Activated CD4-positive, alpha-beta T cell treated with anti-CD3 and anti-CD28 coated beads, Interleukin-2, amount 10 ng/mL, durations not matched to agents 24 days and 14 days (primary cell): ENCODE measurements at regions of chr4 and their contacts with region 1.

Region 1: DNA sequence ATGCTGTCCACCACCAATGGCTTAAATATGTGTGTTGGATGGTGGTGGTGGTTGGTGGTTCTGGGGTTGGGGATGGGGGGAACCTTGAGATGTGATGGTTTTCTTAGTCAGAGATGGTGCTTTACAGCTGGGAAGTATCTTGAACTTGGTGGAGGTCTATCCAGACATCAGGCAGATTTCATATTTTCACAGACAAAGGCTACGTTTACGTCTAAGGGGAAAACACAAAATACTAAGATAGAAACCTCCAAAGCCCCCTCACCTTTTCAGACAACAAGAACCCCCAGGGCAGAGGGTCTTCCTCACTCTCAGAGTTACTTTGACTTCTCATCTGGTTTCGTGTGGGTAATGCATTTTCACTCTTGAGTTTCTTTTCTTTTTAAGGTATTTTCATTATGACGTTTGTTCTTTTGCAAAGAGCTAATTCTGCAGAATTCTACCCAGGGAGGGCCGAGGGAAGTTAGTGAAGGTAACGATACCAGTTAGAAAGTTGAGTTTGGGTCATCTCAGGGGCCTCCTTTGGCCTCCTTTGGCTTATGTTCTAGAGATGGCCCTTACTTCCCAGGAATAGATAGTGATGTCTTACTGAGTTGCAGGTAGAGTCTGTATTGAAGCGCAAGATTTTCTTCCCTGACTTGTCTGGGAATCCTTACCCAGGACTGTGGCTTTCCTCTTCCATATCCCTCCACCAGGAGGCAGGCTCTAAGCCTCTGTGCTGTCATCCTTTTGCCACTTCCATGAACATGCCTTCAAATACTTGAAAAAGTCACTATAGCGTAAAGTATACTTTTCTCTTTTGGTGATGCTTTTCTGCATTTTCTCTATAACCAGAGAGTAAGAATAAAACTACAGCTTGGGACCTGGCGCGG is 31.9 kb downstream of the RHOH start:
- DNase-seq: peak; percentile 80
- H3K4me3 Mint-ChIP-seq: peak overlapping the region; percentile 82
- H3K27ac Mint-ChIP-seq: peak overlapping the region; percentile 98
- H3K4me1 Mint-ChIP-seq: peaks cover 76% of the 10 kb centered on the region
- H3K27me3 Mint-ChIP-seq: no peaks in the 10 kb centered on the region

Region 2: DNA sequence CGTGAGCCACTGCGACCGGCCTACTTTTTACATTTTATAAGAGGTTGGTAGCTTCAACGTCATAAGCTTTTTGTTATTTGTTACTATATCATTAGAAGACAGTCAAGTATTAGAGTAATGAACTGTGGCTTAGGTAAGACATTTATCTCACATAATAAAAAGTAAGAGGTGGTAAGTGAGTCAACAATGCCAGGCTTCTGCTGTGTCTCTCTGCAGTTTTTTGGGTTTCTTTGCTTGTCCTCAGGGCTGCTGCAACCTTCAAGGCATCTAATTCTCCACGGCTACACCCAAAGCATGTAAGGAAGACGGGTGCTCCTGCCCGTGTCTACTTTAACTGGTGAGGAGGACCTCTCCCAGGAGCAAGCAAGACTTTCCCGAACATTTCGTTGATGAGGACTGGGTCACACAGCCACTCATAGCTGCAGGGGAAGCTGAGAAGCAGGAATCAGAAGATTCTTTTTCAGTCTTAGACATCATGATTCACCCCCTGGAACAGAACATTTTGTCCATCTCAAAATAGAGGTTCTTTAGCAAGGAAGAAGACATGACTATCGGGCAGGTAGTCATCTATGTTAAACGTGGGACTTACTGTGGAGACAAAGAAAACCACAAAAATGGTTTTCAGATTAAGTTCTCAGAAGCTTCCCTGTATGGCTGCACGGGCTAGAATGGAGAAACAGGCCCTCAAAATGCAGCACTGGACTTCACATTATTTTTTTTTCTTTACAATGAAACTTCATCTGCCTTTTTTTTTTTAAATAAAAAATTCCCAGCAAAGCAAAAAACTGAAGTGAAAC is 44.9 kb before region 1 on chr4:
- intact Hi-C with region 1: loop called (anchors 1 kb)
- DNase-seq: no peak
- H3K4me3 Mint-ChIP-seq: peak overlapping the region; percentile 21
- H3K27ac Mint-ChIP-seq: peak overlapping the region; percentile 77
- H3K4me1 Mint-ChIP-seq: peaks cover 32% of the 10 kb centered on the region
- H3K27me3 Mint-ChIP-seq: no peaks in the 10 kb centered on the region

Region 3: DNA sequence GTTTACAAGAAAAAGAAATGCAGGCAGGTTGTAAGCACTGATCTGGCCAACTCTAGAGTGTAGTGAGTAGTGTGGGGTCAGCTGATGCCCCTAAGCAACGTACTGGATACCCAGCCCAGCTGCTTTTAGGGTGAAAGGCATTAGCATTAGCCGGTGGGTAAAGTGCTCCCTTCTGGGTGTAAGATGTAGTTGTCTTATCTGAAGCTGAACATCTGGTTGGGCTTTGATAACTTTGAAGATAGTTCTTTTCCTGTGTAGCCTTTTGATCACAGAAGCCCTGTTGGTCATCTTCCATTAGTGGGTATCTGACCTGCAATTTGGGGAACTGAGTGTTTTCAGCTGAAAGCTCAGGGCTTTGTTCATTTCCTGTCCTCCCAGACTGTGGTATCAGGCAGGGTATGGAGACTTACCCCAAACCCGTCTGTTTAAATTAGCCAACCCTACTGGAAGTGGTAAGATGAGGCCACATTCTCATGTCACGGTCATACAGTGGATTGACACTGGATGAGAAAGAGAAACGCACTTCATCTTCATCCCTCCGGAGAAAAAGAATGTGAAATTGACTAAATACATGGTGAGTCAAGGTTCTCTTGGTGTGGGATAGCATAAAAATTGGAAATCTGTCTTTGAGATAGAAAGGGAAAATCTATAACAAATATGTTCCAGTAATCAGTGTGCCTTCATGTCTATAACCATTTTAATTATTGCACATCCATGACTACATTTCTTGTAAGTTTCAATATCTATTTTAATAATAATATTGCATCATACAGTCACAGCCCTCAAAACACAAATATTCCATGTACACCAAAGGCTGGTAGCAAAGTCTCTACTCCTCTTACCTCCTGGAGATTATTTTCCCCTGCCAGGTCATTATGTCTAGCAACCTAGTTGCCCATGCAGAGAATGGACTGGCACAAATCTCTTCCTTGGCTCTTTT is 23.2 kb before region 1 on chr4:
- intact Hi-C with region 1: loop called (anchors 1 kb)
- DNase-seq: peak; percentile 87
- H3K4me3 Mint-ChIP-seq: peak overlapping the region; percentile 93
- H3K27ac Mint-ChIP-seq: peak overlapping the region; percentile 94
- H3K4me1 Mint-ChIP-seq: peaks cover 66% of the 10 kb centered on the region
- H3K27me3 Mint-ChIP-seq: no peaks in the 10 kb centered on the region

Region 4: GRCh38 chr4:40255393-40256281 is 26.9 kb after region 1 on chr4:
- intact Hi-C with region 1: loop called (anchors 1 kb)
- DNase-seq: no peak
- H3K4me3 Mint-ChIP-seq: peak overlapping the region; percentile 53
- H3K27ac Mint-ChIP-seq: peak overlapping the region; percentile 80
- H3K4me1 Mint-ChIP-seq: peaks cover 55% of the 10 kb centered on the region
- H3K27me3 Mint-ChIP-seq: no peaks in the 10 kb centered on the region

Region 5: DNA sequence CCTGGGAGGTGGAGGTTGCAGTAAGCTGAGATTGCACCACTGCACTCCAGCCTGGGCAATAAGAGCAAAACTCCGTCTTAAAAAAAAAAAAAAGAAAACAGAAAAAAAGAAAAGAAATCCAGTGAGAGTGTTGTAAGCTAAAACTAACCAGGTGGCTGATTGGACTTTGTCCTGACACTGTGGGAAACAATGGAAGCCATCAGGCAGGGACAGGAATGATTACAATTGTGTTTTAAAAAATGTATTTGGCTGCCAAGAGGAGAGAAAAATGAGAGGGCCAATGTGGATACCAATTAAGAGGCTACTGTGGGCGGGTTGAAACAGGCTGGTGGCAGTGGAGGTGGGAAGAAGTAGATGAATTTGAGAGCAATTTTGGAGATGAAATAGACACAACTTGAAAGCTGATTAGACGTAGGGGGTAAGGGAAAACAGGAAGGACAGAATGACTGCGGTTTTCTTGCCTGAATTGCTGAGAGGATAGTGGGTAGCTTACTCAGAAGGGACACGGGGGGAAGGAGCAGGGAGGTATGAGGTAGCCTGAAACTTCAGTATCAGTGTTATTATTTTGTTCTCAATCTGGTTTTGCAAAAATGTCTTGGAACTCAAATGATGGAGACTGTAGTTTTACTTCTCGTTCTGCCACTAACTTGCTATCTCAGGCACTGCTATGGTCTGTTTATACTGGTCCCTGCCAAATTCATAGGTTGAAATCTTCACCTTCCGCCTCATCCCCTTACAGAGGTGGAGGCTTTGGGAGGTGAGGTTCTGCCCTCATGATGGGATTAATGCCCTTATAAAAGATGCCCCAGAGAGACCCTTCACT is 60.8 kb after region 1 on chr4:
- intact Hi-C with region 1: loop called (anchors 1 kb)
- DNase-seq: peak; percentile 77
- H3K4me3 Mint-ChIP-seq: peak overlapping the region; percentile 60
- H3K27ac Mint-ChIP-seq: peak overlapping the region; percentile 85
- H3K4me1 Mint-ChIP-seq: peaks cover 50% of the 10 kb centered on the region
- H3K27me3 Mint-ChIP-seq: no peaks in the 10 kb centered on the region

Region 6: DNA sequence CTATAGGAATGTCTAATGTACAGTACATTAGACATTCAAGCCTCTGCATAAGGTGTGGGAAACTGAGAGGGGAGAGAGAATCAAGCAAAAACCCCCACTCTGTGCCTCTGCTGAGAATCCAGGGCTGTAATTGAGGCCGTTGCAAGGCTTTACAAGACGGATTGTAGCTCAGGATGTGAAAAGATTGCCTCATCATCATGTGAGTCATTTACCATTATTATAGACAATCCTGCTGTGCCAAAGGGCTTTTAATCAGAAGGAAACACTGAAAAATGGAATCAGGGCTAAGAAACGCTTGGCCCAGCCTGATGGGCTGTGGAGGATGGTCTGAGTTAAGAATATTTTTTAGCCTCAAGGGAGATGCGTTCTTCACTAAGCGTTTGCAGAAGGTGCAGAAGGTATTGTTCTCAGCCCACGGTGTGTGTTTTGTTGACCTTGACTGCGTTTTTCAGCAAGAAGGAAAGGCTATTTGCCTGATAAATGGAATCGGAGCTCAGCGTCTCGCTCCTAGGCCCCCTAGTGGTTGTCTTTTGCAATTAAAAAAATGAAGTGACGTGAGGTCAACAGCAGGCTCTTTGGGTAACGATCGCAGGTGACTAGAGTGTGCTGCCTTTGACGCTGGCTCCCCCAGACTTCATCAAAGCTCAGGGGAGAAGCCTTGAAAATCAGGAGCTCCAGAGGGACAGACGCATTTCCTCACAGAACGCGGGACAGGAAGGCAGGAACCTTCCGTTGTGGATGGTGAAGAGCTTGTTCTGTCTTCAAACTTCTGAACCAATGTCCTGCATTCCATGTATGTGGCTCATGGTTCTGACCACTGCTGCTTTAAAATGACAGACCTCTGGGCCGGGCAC is 88.3 kb after region 1 on chr4:
- intact Hi-C with region 1: loop called (anchors 1 kb)
- DNase-seq: peak; percentile 91
- H3K4me3 Mint-ChIP-seq: peak overlapping the region; percentile 91
- H3K27ac Mint-ChIP-seq: peak overlapping the region; percentile 100
- H3K4me1 Mint-ChIP-seq: peaks cover 48% of the 10 kb centered on the region
- H3K27me3 Mint-ChIP-seq: no peaks in the 10 kb centered on the region